Left cardiac atrium (tissue), 4 donors: ENCODE measurements at regions of chr1 and their contacts with region 1.

Region 1: DNA sequence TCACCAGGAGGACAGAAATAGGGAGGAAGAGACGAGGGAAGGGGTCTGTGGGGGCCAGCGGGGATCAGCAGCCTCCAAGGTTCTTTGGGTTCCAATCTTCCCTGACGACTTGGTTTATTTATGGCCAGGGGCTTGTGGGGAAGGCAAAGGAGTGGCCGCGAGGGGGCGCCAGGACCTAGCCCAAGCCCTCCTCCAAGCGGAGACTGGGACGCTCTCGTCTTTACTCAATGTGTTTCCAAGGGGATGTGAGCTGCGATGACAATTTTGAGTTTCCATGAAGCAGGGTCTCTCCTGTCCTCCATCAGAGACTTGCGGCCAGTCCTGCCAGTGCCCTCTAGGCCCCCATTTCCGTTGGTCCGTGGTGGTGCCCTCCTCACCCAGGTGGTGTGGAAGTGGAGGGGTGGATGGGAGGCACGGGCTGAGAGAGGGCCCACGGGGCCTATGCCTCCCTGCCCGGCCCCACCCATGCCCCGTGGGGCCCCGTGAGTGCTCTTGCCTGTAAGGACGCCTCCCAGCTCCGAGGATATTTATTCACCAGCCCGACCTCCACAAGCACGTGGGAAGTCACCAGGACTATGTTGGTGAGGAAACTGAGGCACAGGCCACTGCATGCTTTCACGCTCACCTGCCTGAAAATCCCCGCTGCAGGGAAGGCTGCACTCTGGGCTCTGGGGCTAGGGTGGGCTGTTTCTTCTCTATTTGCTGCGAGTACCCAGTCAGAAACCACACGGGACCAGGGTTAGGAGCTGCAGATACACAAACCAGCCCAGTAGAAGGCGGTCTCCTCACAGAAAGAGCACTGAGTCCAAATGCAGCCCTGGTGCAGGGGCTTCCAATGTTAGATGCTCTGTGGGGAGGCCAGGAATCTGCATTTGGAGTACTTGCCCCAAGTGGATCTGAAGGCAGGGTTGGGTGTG is 26.5 kb downstream of the DMRTB1 start:
- DNase-seq: peak; percentile 81
- ATAC-seq: peak; percentile 89

Region 2: GRCh38 chr1:53285969-53286760 is 199.6 kb before region 1 on chr1:
- intact Hi-C with region 1: no loop called
- DNase-seq: no peak
- ATAC-seq: no peak

Region 3: GRCh38 chr1:53585129-53585528 is 99.4 kb after region 1 on chr1:
- intact Hi-C with region 1: loop called in 1 of 2 experiments (anchors 5 kb)
- DNase-seq: no peak
- ATAC-seq: peak in 1 of 2 donors; percentile 45

Region 4: DNA sequence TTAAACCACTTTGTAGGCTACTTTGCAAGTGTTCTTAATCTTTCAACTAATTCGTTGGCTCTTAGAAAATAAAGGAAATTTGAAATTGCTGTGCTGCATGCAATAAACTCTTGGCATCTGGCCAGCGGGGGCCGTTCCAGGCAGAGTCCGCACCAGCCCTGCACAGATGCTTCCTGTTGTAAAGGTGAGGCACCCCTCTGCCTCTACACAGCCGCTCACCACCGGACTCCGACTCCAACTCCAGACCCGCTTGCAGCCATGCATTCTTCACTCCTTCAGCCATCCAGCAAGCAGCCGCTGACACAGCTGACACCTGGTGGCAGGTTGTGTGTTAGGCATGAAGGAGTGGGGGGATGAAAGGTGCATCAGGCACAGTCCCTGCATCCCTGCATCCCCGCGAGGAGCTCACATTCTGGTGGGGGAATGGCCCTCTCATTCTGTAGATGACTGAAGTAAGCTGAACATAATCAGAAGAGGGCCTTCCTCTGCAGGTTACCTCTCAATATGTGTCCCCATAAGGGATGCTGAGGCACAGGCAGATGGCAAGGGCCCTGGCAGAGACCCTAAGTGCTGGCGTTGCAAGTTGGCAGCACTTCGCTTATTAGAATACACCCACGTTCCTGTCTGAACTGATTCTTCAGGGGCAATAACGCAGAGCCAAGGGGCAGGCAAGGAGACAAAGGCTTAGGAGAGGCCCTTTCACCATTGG is 196.4 kb after region 1 on chr1:
- intact Hi-C with region 1: loop called in 1 of 2 experiments (anchors 10 kb)
- DNase-seq: peak; percentile 33
- ATAC-seq: peak in 1 of 2 donors; percentile 28

Region 5: DNA sequence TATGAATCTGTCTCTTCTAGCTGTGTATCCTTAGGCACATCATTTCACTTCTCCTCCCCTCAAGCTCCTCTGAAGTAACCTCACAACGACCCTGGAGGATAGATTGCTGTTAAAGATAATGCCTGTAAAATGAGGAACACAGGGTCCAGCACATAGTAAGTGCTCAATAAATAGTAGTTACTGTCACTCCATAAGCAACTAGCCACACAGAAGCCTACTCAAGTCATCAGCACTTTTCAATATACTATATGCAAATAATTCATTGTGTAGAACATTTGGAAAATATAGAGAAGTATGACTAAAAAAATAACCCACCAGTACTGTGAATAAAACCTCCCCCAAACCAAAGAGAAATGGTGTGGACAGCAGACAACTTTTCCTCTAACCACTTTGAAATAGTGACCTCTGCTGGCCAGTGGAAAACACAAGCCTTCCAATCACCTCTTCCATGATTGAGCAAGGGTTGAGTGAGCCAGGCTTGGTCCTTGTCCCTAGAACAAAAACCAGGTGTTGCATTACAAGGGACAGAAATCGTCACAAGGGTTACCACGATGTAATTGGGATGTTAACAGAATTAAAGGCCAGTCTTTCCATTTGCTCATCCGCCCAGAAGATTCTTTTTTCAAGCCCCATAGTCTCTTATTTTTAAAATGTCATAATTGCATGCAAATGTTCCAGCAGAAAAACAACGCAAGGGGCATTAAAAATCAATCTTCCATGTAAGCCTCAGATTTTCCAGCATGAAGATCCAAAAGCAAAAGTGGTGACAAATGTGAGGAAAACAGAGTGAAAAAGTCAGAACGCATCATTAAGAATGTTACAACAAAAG is 269.0 kb after region 1 on chr1:
- intact Hi-C with region 1: loop called (anchors 5 to 10 kb)
- DNase-seq: peak; percentile 34
- ATAC-seq: peak in 1 of 2 donors; percentile 39